ENCODE measurements at regions of chr16 and their contacts with region 1.

Region 1: GRCh38 chr16:75764154-75764768 is 38.0 kb upstream of the CPHXL start:
- DNase-seq: peak; percentile 32
- H3K4me3 ChIP-seq: no peak overlapping the region
- H3K27ac ChIP-seq: no peak overlapping the region
- H3K27me3 ChIP-seq: no peaks in the 10 kb centered on the region
- CTCF ChIP-seq: peak; percentile 87

Region 2: DNA sequence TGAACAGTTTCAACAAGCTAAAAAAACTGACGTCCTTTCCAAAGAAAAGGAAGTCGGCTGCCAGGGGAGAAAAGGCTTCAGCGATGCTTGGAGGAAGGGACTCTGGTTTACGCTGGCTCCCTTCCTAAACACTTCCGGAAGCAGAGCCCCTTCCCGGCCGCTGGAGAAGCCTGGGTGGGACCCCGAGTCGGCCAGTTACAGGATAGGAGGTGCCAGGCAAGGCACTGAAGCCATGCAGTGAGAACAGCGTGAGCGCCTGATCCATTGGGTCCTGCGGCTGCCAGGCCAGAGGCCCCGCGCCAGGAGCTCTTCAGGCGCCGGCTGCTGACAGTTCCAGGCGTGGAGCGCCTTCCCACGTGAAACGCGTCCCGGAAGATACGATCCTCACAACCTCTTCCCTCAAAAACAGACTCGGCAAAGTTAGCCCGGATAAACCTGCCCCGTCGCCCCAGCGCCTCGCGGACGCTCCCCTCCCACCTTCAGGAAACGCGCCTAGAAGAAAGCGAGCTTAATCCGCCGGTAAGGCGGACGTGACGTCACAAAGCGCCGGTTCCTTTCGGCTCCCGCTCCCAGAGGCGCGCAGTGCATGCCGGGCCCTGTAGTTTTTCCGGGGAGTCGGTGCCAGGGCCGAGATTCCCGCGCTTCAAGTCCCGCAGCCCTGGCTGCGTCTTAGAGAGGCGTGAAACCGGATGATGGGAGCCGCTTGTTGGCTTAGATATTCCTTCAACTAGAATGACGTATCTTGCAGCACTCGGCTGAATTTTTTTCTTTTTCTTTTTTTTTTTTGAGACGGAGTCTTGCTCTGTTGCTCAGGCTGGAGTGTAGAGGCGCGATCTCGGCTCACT is 141.3 kb before region 1 on chr16 and contains the start of gene ADAT1:
- CTCF ChIA-PET with region 1: interaction called, 17 read pairs
- POLR2A ChIA-PET with region 1: no interaction called
- DNase-seq: peak; percentile 94
- H3K4me3 ChIP-seq: peak within 1 kb of the TSS; percentile 85
- H3K27ac ChIP-seq: peak within 1 kb of the TSS; percentile 79
- H3K27me3 ChIP-seq: no peaks in the 10 kb centered on the region
- CTCF ChIP-seq: no peak
- polyA plus RNA-seq, gene ADAT1: 32.2 and 32.5 TPM in 2 replicates

Region 3: GRCh38 chr16:75647492-75648264 is 116.6 kb before region 1 on chr16 and contains the starts of genes KARS1 and TERF2IP:
- CTCF ChIA-PET with region 1: interaction called, 33 read pairs
- POLR2A ChIA-PET with region 1: interaction called, 8 read pairs
- DNase-seq: peak; percentile 74
- H3K4me3 ChIP-seq: peak within 1 kb of the TSS; percentile 94
- H3K27ac ChIP-seq: peak within 1 kb of the TSS; percentile 90
- H3K27me3 ChIP-seq: no peaks in the 10 kb centered on the region
- CTCF ChIP-seq: no peak
- polyA plus RNA-seq, gene KARS1: 190 and 203 TPM in 2 replicates
- polyA plus RNA-seq, gene TERF2IP: 41.4 and 59.5 TPM in 2 replicates

Region 4: GRCh38 chr16:75660726-75661302 is 103.4 kb before region 1 on chr16:
- CTCF ChIA-PET with region 1: interaction called, 16 read pairs
- POLR2A ChIA-PET with region 1: no interaction called
- DNase-seq: no peak
- H3K4me3 ChIP-seq: no peak overlapping the region
- H3K27ac ChIP-seq: no peak overlapping the region
- H3K27me3 ChIP-seq: no peaks in the 10 kb centered on the region
- CTCF ChIP-seq: no peak

Measured in AG04450 (cell line).